Panc1 (cell line): ENCODE measurements at regions of chr2 and their contacts with region 1.

Region 1: GRCh38 chr2:55511508-55512124 is 7.9 kb upstream of the CFAP36 start:
- DNase-seq: no peak
- ATAC-seq: peak; percentile 87
- H3K4me3 ChIP-seq: no peak overlapping the region
- H3K27ac ChIP-seq: no peak overlapping the region
- H3K4me1 ChIP-seq: no peaks in the 10 kb centered on the region
- H3K27me3 ChIP-seq: no peaks in the 10 kb centered on the region
- CTCF ChIP-seq: peak; percentile 75

Region 2: GRCh38 chr2:55395724-55396605 is 115.7 kb before region 1 on chr2:
- CTCF ChIA-PET with region 1: no interaction called
- POLR2A ChIA-PET with region 1: no interaction called
- in situ Hi-C with region 1: no loop called
- intact Hi-C with region 1: no loop called
- DNase-seq: no peak
- ATAC-seq: no peak
- H3K4me3 ChIP-seq: no peak overlapping the region
- H3K27ac ChIP-seq: no peak overlapping the region
- H3K4me1 ChIP-seq: no peaks in the 10 kb centered on the region
- H3K27me3 ChIP-seq: no peaks in the 10 kb centered on the region
- CTCF ChIP-seq: no peak

Region 3: GRCh38 chr2:55419679-55420438 is 91.8 kb before region 1 on chr2 and contains the start of gene CCDC88A:
- CTCF ChIA-PET with region 1: interaction called, 4 read pairs
- POLR2A ChIA-PET with region 1: no interaction called
- in situ Hi-C with region 1: no loop called
- intact Hi-C with region 1: loop called (anchors 5 kb)
- DNase-seq: peak; percentile 83
- ATAC-seq: peak; percentile 95
- H3K4me3 ChIP-seq: peak within 1 kb of the TSS; percentile 74 to 96
- H3K27ac ChIP-seq: peak within 1 kb of the TSS; percentile 95
- H3K4me1 ChIP-seq: peaks cover 11% of the 10 kb centered on the region; the same call in 1 of the 2 replicates
- H3K27me3 ChIP-seq: no peaks in the 10 kb centered on the region
- CTCF ChIP-seq: no peak
- total RNA-seq, gene CCDC88A: 99.8 TPM

Region 4: DNA sequence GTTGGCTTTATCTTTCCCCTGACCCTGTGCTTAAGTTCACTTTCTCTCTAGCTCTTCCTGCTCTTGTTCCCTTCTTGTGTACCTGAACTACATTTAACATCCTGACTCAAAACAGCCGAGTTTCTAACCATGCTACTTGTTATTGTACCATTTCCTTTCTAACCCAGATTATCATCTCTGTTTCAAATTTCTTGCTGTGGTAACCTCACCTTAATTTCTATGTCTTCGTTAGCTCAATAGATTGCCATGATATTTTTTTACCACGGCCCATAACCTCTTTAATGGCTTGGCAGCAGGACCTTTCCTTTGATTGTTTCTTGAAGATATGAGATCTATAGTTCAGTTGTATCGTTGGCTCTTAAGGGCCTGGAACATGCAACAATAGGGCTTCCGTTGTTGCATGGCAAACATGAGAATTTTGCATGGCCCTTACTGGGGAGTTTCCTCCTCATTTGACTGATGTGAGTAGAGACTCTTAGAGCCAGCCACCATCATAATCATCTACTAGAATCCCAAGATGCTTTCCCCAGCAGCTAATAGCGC is 19.0 kb after region 1 on chr2:
- CTCF ChIA-PET with region 1: no interaction called
- POLR2A ChIA-PET with region 1: no interaction called
- in situ Hi-C with region 1: no loop called
- intact Hi-C with region 1: no loop called
- DNase-seq: no peak
- ATAC-seq: no peak
- H3K4me3 ChIP-seq: no peak overlapping the region
- H3K27ac ChIP-seq: no peak overlapping the region
- H3K4me1 ChIP-seq: no peaks in the 10 kb centered on the region
- H3K27me3 ChIP-seq: no peaks in the 10 kb centered on the region
- CTCF ChIP-seq: no peak